HEK293 (cell line): ENCODE measurements at regions of chr19 and their contacts with region 1.

Region 1: GRCh38 chr19:3721131-3721886 is 13.1 kb downstream of the TJP3 start:
- H3K4me3 ChIP-seq: no peak overlapping the region; the same call in none of the 2 replicates
- H3K27ac ChIP-seq: no peak overlapping the region
- H3K4me1 ChIP-seq: no peaks in the 10 kb centered on the region
- CTCF ChIP-seq: no peak

Region 2: GRCh38 chr19:3762501-3763459 is 41.5 kb after region 1 on chr19 and contains the start of gene MRPL54:
- CTCF ChIA-PET with region 1: interaction called, 7 read pairs
- POLR2A ChIA-PET with region 1: interaction called, 10 read pairs
- H3K4me3 ChIP-seq: peak within 1 kb of the TSS; percentile 96
- H3K27ac ChIP-seq: peak within 1 kb of the TSS; percentile 68
- H3K4me1 ChIP-seq: no peaks in the 10 kb centered on the region; the same call in 1 of the 2 replicates
- CTCF ChIP-seq: no peak